Activated CD4-positive, alpha-beta memory T cell treated with anti-CD3 and anti-CD28 coated beads for 36 hours (primary cell): ENCODE measurements at regions of chr12 and their contacts with region 1.

Region 1: GRCh38 chr12:75480469-75480949 is at the start of gene GLIPR1:
- DNase-seq: peak; percentile 86
- H3K4me3 Mint-ChIP-seq: peak within 1 kb of the TSS; percentile 89
- H3K27ac Mint-ChIP-seq: peak within 1 kb of the TSS; percentile 88
- H3K4me1 Mint-ChIP-seq: peaks cover 85% of the 10 kb centered on the region
- H3K27me3 Mint-ChIP-seq: peaks cover 1% of the 10 kb centered on the region
- total RNA-seq, gene GLIPR1: 5.8 to 6.8 TPM

Region 2: GRCh38 chr12:74537707-74538385 is 942.7 kb before region 1 on chr12 and contains the start of gene ATXN7L3B:
- CTCF ChIA-PET with region 1: no interaction called
- POLR2A ChIA-PET with region 1: no interaction called
- intact Hi-C with region 1: loop called (anchors 10 kb)
- DNase-seq: peak; percentile 97
- H3K4me3 Mint-ChIP-seq: peak within 1 kb of the TSS; percentile 92
- H3K27ac Mint-ChIP-seq: peak within 1 kb of the TSS; percentile 94
- H3K4me1 Mint-ChIP-seq: peaks cover 48% of the 10 kb centered on the region
- H3K27me3 Mint-ChIP-seq: no peaks in the 10 kb centered on the region
- total RNA-seq, gene ATXN7L3B: 16.7 to 17.0 TPM

Region 3: GRCh38 chr12:75065482-75065881 is 415.0 kb before region 1 on chr12:
- CTCF ChIA-PET with region 1: no interaction called
- POLR2A ChIA-PET with region 1: no interaction called
- intact Hi-C with region 1: no loop called
- DNase-seq: no peak
- H3K4me3 Mint-ChIP-seq: no peak overlapping the region
- H3K27ac Mint-ChIP-seq: no peak overlapping the region
- H3K4me1 Mint-ChIP-seq: no peaks in the 10 kb centered on the region
- H3K27me3 Mint-ChIP-seq: no peaks in the 10 kb centered on the region

Region 4: GRCh38 chr12:75099210-75099609 is 381.3 kb before region 1 on chr12:
- CTCF ChIA-PET with region 1: no interaction called
- POLR2A ChIA-PET with region 1: no interaction called
- intact Hi-C with region 1: no loop called
- DNase-seq: no peak
- H3K4me3 Mint-ChIP-seq: no peak overlapping the region
- H3K27ac Mint-ChIP-seq: no peak overlapping the region
- H3K4me1 Mint-ChIP-seq: no peaks in the 10 kb centered on the region
- H3K27me3 Mint-ChIP-seq: no peaks in the 10 kb centered on the region

Region 5: DNA sequence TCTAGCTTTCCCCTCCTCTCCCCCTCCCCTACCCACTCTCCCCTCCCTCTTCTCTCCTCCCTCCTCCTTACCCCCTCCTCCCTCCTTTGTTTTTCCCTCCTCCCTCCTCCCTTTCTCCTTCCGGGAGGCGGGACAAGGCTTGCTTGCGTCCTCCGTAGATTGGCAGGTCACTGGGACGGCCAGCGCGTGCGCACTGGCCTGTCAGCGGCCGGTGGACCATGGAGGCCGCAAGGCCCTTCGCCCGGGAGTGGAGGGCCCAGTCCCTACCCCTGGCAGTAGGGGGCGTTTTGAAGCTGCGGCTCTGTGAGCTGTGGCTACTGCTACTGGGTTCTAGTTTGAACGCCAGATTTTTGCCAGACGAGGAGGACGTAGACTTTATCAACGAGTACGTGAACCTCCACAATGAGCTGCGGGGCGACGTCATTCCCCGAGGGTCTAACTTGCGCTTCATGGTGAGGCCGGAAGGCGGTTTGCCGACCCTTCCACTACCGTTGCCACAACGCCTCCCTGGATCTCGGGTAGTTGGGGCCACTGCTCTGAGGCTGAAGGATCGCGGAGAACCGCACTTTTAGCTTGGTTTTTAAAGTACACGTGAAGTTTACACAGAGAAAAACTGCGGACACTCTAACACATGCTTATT is 89.5 kb before region 1 on chr12 and contains the start of gene GLIPR1L2:
- CTCF ChIA-PET with region 1: interaction called, 22 read pairs
- POLR2A ChIA-PET with region 1: interaction called, 5 read pairs
- intact Hi-C with region 1: loop called (anchors 1 kb)
- DNase-seq: peak; percentile 95
- H3K4me3 Mint-ChIP-seq: peak within 1 kb of the TSS; percentile 86
- H3K27ac Mint-ChIP-seq: peak within 1 kb of the TSS; percentile 93
- H3K4me1 Mint-ChIP-seq: peaks cover 40% of the 10 kb centered on the region
- H3K27me3 Mint-ChIP-seq: no peaks in the 10 kb centered on the region
- total RNA-seq, gene GLIPR1L2: 0.17 to 0.24 TPM

Region 6: DNA sequence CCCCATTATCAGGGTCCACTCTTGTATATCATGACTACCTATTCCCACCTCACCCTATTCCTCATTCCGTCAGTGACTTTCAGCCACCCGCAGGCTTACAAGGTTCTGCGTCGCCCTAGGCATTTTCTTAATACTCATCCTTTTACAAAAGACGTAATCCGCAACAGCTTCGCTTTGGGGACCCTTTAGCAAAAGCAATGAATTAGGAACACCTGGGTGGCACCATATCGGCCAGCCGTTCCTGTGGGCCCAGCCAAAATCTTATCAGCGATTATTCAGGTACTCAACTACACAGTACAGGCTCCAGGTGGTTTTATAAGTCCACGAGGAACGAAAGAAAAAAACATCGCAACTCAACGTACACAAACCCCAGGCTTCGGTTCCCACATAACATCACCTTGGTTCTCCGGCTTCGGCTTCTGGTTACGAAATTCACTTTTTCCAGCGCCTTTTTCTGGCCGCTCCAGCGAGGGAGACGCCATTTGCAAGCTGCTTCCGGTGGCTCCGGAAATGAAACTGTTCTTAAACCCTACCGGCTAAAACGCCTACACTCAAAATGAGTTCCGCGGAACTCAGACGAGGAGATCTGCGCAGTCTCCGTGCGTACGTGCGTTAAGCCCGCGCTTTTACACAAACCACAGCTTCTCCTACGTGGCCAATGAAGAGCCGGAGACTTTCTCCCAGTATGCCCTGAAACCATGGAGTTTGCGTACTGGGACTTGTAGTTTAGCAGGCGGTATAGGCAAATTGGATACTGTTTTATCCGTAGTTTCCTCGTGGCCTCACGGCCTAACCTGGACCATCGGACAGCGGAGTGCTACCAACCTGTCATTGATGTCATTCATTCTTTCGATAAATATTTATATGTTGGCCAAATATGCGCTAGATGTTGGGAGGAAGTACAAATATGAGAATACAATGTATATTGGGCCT is 30.9 kb after region 1 on chr12 and contains the start of gene KRR1:
- CTCF ChIA-PET with region 1: interaction called, 21 read pairs
- POLR2A ChIA-PET with region 1: interaction called, 5 read pairs
- intact Hi-C with region 1: loop called (anchors 1 kb)
- DNase-seq: peak; percentile 95
- H3K4me3 Mint-ChIP-seq: peak within 1 kb of the TSS; percentile 99
- H3K27ac Mint-ChIP-seq: peak within 1 kb of the TSS; percentile 98
- H3K4me1 Mint-ChIP-seq: peaks cover 31% of the 10 kb centered on the region
- H3K27me3 Mint-ChIP-seq: no peaks in the 10 kb centered on the region
- total RNA-seq, gene KRR1: 96.6 to 106 TPM

Region 7: DNA sequence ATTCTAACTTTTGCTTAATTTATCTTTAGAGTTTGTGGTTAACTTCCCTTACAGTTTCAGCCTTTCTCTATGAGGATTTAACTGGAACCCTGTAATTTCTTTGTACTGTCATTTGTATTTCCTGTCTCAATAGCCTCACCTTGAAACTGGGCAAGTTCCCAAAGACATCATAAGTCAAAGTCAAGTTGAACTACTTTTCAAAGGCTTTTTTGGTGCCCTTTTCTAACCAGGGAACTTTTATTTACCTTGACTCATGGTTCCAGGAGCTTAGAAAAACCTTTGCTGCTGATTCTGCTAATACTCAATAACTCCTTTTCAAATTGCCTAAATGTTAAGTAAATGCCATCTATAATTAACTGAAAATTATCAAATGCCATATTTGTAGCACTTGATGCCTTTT is 231.7 kb after region 1 on chr12:
- CTCF ChIA-PET with region 1: no interaction called
- POLR2A ChIA-PET with region 1: no interaction called
- intact Hi-C with region 1: loop called (anchors 5 kb)
- DNase-seq: no peak
- H3K4me3 Mint-ChIP-seq: no peak overlapping the region
- H3K27ac Mint-ChIP-seq: no peak overlapping the region
- H3K4me1 Mint-ChIP-seq: peaks cover 11% of the 10 kb centered on the region
- H3K27me3 Mint-ChIP-seq: no peaks in the 10 kb centered on the region

Region 8: DNA sequence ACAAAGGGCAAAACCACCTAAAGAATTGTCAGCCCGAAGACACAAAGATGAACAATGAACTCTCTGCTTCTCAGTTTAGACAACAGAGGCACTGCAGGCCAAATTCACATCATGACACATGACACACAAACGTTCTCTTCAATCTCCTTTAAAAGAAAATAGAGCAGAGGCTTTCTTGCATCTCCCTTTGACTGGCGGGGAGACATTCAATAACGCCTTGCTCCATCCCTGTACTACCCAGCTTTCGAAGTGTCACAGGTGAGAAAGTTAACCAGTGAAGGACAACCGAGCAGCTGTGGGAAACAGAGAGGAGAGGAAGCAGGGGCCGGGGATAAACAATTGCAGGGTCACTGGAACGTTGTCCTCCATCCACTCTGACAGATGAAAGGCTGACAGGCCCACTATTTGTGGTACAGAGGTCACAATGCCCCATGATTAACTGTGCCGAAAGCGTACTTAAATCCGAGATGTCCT is 420.3 kb after region 1 on chr12:
- CTCF ChIA-PET with region 1: no interaction called
- POLR2A ChIA-PET with region 1: no interaction called
- intact Hi-C with region 1: no loop called
- DNase-seq: no peak
- H3K4me3 Mint-ChIP-seq: no peak overlapping the region
- H3K27ac Mint-ChIP-seq: no peak overlapping the region
- H3K4me1 Mint-ChIP-seq: no peaks in the 10 kb centered on the region
- H3K27me3 Mint-ChIP-seq: no peaks in the 10 kb centered on the region

Region 9: DNA sequence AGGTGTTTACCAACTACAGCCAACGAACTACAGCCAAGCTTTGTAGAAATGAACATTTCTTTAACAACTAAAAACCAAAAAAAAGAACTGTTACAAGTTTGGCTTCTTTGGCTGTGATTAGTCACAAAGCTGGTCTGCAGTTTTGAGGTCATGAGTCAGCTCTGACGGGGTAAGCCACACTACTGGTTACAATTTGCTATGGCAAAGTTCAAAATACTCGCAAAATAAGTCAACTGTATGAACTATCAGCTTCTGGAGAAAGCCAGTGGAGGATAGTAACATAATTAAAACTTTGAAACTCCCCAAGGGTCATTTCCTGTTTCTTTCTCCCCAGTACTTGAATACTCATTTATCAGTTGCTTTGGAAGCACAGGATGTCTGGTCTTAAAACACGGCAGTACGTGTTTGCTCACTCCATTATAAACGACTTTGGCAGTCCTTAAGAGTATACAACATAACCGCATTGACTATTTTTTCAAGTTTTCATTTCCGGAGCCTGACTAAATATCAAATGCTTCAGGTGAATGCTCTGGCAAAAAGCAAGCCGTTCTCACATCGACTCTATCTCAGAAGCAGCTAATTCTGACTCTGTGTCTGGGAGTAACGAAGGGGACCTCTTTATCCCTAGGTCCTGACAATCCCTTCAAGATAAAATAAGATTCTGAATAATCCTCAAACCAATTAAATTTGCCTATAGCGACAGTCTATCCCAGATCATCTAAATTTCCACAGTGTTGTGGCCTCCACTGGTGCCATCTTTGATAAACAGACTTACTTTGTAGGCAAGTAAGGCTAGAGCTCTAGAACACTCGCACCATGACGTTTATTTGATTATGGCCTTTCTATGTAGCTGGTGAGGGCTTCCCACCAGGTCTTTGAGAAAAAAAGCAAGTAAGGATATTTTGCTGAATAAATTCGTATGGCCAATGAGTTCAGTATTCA is 540.5 kb after region 1 on chr12:
- CTCF ChIA-PET with region 1: interaction called, 3 read pairs
- POLR2A ChIA-PET with region 1: interaction called, 3 read pairs
- intact Hi-C with region 1: loop called (anchors 1 kb)
- DNase-seq: peak; percentile 90
- H3K4me3 Mint-ChIP-seq: peak overlapping the region; percentile 68
- H3K27ac Mint-ChIP-seq: peak overlapping the region; percentile 99
- H3K4me1 Mint-ChIP-seq: peaks cover 60% of the 10 kb centered on the region
- H3K27me3 Mint-ChIP-seq: no peaks in the 10 kb centered on the region

Region 10: GRCh38 chr12:76158518-76159321 is 678.2 kb after region 1 on chr12:
- CTCF ChIA-PET with region 1: no interaction called
- POLR2A ChIA-PET with region 1: interaction called, 7 read pairs
- intact Hi-C with region 1: loop called (anchors 1 kb)
- DNase-seq: peak; percentile 91
- H3K4me3 Mint-ChIP-seq: peak overlapping the region; percentile 16
- H3K27ac Mint-ChIP-seq: peak overlapping the region; percentile 25
- H3K4me1 Mint-ChIP-seq: peaks cover 16% of the 10 kb centered on the region
- H3K27me3 Mint-ChIP-seq: peaks cover 12% of the 10 kb centered on the region